Heart right ventricle (tissue), 16 donors: ENCODE measurements at regions of chr9 and their contacts with region 1.

Region 1: DNA sequence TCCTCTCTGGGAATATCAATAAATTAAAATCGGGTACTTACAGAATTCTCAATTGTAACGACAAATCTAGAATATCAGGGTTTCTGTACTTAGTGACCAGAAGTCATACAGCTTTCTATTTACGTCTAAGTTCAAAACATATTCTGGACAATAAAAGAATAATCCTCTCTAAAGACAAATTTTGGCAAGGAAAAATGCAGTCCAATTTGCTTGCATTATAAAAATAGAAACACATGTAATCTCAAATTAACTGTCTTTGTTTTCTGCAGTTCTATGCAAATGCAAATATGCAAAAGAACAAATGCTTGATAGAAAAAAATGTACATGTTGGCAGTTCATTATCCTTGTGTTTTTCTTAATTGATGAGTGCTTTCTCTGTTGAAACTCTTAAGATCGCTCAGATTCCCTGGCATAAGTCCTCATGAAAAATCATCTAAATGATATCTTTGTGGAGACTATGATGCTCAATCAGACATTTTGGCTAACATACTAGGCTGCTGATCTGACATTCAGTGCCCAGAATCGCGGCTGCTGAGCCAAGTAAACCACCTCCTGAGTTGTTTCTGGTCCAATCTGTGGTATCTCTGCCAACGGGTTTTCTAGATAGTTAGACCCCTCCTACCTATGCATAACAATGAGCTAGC is 990.1 kb upstream of the C9orf72 start:
- DNase-seq: no peak
- ATAC-seq: no peak
- H3K4me3 ChIP-seq: no peak overlapping the region
- H3K27ac ChIP-seq: no peak overlapping the region
- H3K4me1 ChIP-seq: no peaks in the 10 kb centered on the region
- H3K27me3 ChIP-seq: no peaks in the 10 kb centered on the region
- CTCF ChIP-seq: no peak

Region 2: GRCh38 chr9:28503573-28503972 is 59.8 kb before region 1 on chr9:
- intact Hi-C with region 1: loop called in 1 of 10 experiments (anchors 10 kb)
- DNase-seq: no peak
- ATAC-seq: no peak
- H3K4me3 ChIP-seq: no peak overlapping the region
- H3K27ac ChIP-seq: no peak overlapping the region
- H3K4me1 ChIP-seq: no peaks in the 10 kb centered on the region
- H3K27me3 ChIP-seq: no peaks in the 10 kb centered on the region
- CTCF ChIP-seq: no peak

Region 3: DNA sequence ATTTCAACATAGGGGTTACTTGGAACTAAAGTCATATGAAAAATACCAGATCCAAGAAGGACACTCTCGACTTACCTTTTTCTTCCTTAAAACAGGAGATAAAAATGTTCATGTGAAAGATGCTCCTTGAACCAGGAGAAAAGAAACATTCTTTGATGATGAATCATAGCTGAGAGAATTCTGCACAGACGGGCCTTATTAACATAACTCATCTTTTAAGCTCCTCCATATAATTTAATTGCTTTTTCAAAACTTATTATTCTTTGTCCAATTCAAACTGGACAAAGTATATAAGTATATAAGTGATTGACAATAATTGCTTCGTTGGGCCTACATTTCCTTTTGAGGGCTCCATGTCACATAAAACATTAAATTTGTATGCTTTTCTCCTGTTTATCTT is 45.0 kb before region 1 on chr9:
- intact Hi-C with region 1: no loop called
- DNase-seq: no peak
- ATAC-seq: no peak
- H3K4me3 ChIP-seq: no peak overlapping the region
- H3K27ac ChIP-seq: no peak overlapping the region
- H3K4me1 ChIP-seq: no peaks in the 10 kb centered on the region
- H3K27me3 ChIP-seq: no peaks in the 10 kb centered on the region
- CTCF ChIP-seq: no peak

Region 4: GRCh38 chr9:28616310-28616709 is 52.9 kb after region 1 on chr9:
- intact Hi-C with region 1: loop called in 1 of 10 experiments (anchors 10 kb)
- DNase-seq: no peak
- ATAC-seq: no peak
- H3K4me3 ChIP-seq: no peak overlapping the region
- H3K27ac ChIP-seq: no peak overlapping the region
- H3K4me1 ChIP-seq: no peaks in the 10 kb centered on the region
- H3K27me3 ChIP-seq: no peaks in the 10 kb centered on the region
- CTCF ChIP-seq: no peak